PC-3 (cell line): ENCODE measurements at regions of chr5 and their contacts with region 1.

Region 1: GRCh38 chr5:137051165-137051564 is 448.0 kb downstream of the SPOCK1 start:
- DNase-seq: peak; percentile 52
- ATAC-seq: 0 out of 2 replicates have a peak, but pooled peaks have one; percentile 29
- H3K4me3 ChIP-seq: no peak overlapping the region
- H3K27ac ChIP-seq: no peak overlapping the region
- H3K4me1 ChIP-seq: no peaks in the 10 kb centered on the region
- H3K27me3 ChIP-seq: no peaks in the 10 kb centered on the region
- CTCF ChIP-seq: peak; percentile 65; the same call in 1 of the 2 replicates

Region 2: DNA sequence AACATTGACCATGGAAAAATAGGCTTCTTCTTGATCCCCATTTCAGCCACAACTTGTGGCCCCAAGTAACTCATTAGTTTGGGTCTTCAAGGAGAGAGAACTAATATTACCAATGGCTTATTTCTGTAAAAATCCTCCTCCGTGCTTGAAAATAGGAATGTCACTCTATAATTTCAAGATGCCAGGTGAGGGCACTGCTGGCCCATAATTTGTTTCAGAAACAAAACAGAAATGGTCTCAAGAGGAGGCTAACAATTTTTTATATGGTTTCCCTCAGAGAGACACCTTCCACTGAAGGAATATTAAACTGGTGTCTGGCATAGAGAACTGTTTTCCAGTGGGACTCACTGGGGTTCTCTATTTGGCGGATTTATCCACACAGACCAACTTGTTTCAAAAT is 248.8 kb before region 1 on chr5:
- CTCF ChIA-PET with region 1: no interaction called
- POLR2A ChIA-PET with region 1: no interaction called
- intact Hi-C with region 1: loop called (anchors 5 kb)
- DNase-seq: peak; percentile 56
- ATAC-seq: no peak
- H3K4me3 ChIP-seq: no peak overlapping the region
- H3K27ac ChIP-seq: no peak overlapping the region
- H3K4me1 ChIP-seq: peaks cover 8% of the 10 kb centered on the region; the same call in 1 of the 2 replicates
- H3K27me3 ChIP-seq: no peaks in the 10 kb centered on the region
- CTCF ChIP-seq: peak; percentile 66